ENCODE measurements at regions of chr3 and their contacts with region 1.

Region 1: DNA sequence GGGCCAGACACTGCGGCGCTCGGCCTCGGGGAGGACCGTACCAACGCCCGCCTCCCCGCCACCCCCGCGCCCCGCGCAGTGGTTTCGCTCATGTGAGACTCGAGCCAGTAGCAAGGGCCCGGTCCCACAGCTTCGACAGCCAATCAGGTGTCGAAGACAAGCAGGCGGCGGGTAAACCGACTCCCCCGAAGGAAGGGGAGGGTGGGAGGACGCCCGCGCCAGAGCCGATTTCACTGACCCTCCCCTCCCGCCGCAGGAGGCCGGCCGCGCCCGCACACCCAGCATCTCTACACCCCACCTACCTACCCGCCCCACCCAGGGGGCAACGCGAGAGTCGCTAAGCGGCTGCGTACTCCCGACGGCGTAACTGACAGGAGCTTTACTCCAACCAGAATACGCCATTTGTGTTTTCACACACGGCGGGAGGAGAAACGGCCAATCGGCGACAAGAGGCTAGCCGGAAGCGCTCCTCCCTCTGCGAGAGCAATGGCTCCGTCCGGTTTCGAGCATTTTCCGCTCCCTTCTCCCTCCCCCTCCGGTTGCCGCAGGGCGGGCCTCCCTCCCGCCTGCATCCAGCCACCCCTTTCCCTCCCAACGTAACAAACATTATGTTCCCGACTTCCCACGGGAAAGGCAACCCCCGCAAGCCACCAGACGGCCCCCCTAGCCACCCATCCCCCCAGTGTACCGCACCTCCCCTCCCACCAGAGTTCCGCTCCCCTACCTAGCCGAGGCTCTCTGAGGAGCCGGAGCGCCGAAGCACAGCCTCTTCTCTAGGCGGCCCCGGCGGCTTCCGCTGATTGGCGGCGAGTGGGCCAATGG is 504 bp upstream of the SETD5 start:
- DNase-seq: peak; percentile 99
- ATAC-seq: peak; percentile 71
- H3K4me3 Mint-ChIP-seq: peak overlapping the region; percentile 98
- H3K27ac Mint-ChIP-seq: peak overlapping the region; percentile 100
- H3K4me1 Mint-ChIP-seq: peaks cover 61% of the 10 kb centered on the region
- H3K27me3 Mint-ChIP-seq: no peaks in the 10 kb centered on the region
- CTCF ChIP-seq: no peak

Region 2: GRCh38 chr3:8963137-8963869 is 433.6 kb before region 1 on chr3 and contains the start of gene RAD18:
- CTCF ChIA-PET with region 1: no interaction called
- POLR2A ChIA-PET with region 1: no interaction called
- intact Hi-C with region 1: loop called (anchors 1 kb)
- DNase-seq: peak; percentile 91
- ATAC-seq: peak; percentile 96
- H3K4me3 Mint-ChIP-seq: peak within 1 kb of the TSS; percentile 95
- H3K27ac Mint-ChIP-seq: peak within 1 kb of the TSS; percentile 89
- H3K4me1 Mint-ChIP-seq: peaks cover 31% of the 10 kb centered on the region
- H3K27me3 Mint-ChIP-seq: peaks cover 5% of the 10 kb centered on the region
- CTCF ChIP-seq: no peak
- total RNA-seq, gene RAD18: 16.6 and 21.6 TPM in 2 replicates

Region 3: GRCh38 chr3:9362731-9363530 is 34.0 kb before region 1 on chr3 and contains the start of gene THUMPD3:
- CTCF ChIA-PET with region 1: interaction called, 4 read pairs
- POLR2A ChIA-PET with region 1: interaction called, 84 read pairs
- intact Hi-C with region 1: loop called (anchors 1 kb)
- DNase-seq: peak; percentile 92
- ATAC-seq: peak; percentile 96
- H3K4me3 Mint-ChIP-seq: peak within 1 kb of the TSS; percentile 99
- H3K27ac Mint-ChIP-seq: peak within 1 kb of the TSS; percentile 98
- H3K4me1 Mint-ChIP-seq: peaks cover 16% of the 10 kb centered on the region
- H3K27me3 Mint-ChIP-seq: no peaks in the 10 kb centered on the region
- CTCF ChIP-seq: no peak
- total RNA-seq, gene THUMPD3: 34.3 and 42.0 TPM in 2 replicates

Region 4: GRCh38 chr3:9422712-9423424 is 26.0 kb after region 1 on chr3:
- CTCF ChIA-PET with region 1: interaction called, 3 read pairs
- POLR2A ChIA-PET with region 1: interaction called, 9 read pairs
- intact Hi-C with region 1: loop called (anchors 1 kb)
- DNase-seq: no peak
- ATAC-seq: peak; percentile 28
- H3K4me3 Mint-ChIP-seq: no peak overlapping the region
- H3K27ac Mint-ChIP-seq: peak overlapping the region; percentile 46
- H3K4me1 Mint-ChIP-seq: peaks cover 24% of the 10 kb centered on the region
- H3K27me3 Mint-ChIP-seq: no peaks in the 10 kb centered on the region
- CTCF ChIP-seq: no peak

Region 5: GRCh38 chr3:9749645-9750555 is 353.0 kb after region 1 on chr3 and contains the start of gene OGG1:
- CTCF ChIA-PET with region 1: no interaction called
- POLR2A ChIA-PET with region 1: interaction called, 3 read pairs
- intact Hi-C with region 1: loop called (anchors 2 kb)
- DNase-seq: peak; percentile 89
- ATAC-seq: peak; percentile 90
- H3K4me3 Mint-ChIP-seq: peak within 1 kb of the TSS; percentile 94
- H3K27ac Mint-ChIP-seq: peak within 1 kb of the TSS; percentile 95
- H3K4me1 Mint-ChIP-seq: peaks cover 48% of the 10 kb centered on the region
- H3K27me3 Mint-ChIP-seq: no peaks in the 10 kb centered on the region
- CTCF ChIP-seq: no peak
- total RNA-seq, gene OGG1: 43.5 and 60.7 TPM in 2 replicates

Region 6: GRCh38 chr3:11271986-11272904 is 1875.3 kb after region 1 on chr3 and contains the start of gene ATG7:
- CTCF ChIA-PET with region 1: no interaction called
- POLR2A ChIA-PET with region 1: interaction called, 4 read pairs
- intact Hi-C with region 1: loop called (anchors 2 kb)
- DNase-seq: peak; percentile 97
- ATAC-seq: peak; percentile 97
- H3K4me3 Mint-ChIP-seq: peak within 1 kb of the TSS; percentile 94
- H3K27ac Mint-ChIP-seq: peak within 1 kb of the TSS; percentile 94
- H3K4me1 Mint-ChIP-seq: peaks cover 29% of the 10 kb centered on the region
- H3K27me3 Mint-ChIP-seq: no peaks in the 10 kb centered on the region
- CTCF ChIP-seq: no peak
- total RNA-seq, gene ATG7: 49.0 and 51.7 TPM in 2 replicates

Measured in activated B cell treated with CpG ODN at 0.5 μM for 24 hours (primary cell).